Natural killer cell (primary cell): ENCODE measurements at regions of chr13 and their contacts with region 1.

Region 1: DNA sequence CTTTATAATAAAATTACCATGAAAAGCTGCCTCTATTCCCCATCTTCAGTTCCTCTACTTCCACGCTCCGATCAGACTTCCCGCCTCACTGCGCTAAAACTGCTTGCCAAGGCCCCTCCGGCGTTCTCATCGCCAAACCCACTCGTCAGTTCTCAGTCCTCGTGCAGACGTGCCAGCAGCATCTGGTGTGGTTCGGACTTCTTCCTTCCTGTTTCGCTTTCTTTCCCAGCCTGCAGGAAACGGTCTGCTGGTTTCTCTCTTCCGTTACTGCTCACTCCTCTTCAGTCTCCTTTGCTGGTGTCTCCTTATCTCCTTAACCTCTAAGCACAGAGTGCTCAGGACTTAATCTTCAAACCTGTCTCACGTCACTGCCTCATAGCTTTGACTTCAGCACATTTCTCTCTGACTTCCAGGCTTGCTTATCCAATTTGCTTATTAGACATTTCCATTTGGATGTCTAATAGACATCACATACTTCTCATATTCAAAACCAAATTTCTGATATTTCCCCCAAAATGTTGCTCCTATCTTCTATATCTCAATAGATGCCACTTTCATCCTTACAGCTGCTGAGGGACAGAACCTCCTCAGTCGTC is 40.3 kb downstream of the RCBTB2 start:
- DNase-seq: peak; percentile 67 to 90
- ATAC-seq: peak; percentile 76 to 89 (median 82)
- H3K4me3 ChIP-seq: peak overlapping the region; percentile 44
- H3K4me3 Mint-ChIP-seq: no peak overlapping the region
- H3K27ac ChIP-seq: peak overlapping the region; percentile 90
- H3K27ac Mint-ChIP-seq: no peak overlapping the region
- H3K4me1 ChIP-seq: peaks cover 59% of the 10 kb centered on the region
- H3K4me1 Mint-ChIP-seq: peaks cover 49 to 51% of the 10 kb centered on the region in 2 donors
- H3K27me3 ChIP-seq: no peaks in the 10 kb centered on the region
- H3K27me3 Mint-ChIP-seq: no peaks in the 10 kb centered on the region
- CTCF ChIP-seq: no peak

Region 2: GRCh38 chr13:48233046-48233907 is 259.3 kb before region 1 on chr13 and contains the start of gene ITM2B:
- intact Hi-C with region 1: loop called (anchors 10 kb)
- DNase-seq: peak; percentile 62 to 86
- ATAC-seq: peak; percentile 62 to 83 (median 73)
- H3K4me3 ChIP-seq: peak within 1 kb of the TSS; percentile 96
- H3K4me3 Mint-ChIP-seq: peak within 1 kb of the TSS; percentile 94
- H3K27ac ChIP-seq: peak within 1 kb of the TSS; percentile 97
- H3K27ac Mint-ChIP-seq: peak within 1 kb of the TSS; percentile 92 to 94
- H3K4me1 ChIP-seq: peaks cover 15% of the 10 kb centered on the region
- H3K4me1 Mint-ChIP-seq: peaks cover 47 to 51% of the 10 kb centered on the region in 2 donors
- H3K27me3 ChIP-seq: no peaks in the 10 kb centered on the region
- H3K27me3 Mint-ChIP-seq: peaks cover 0 to 2% of the 10 kb centered on the region in 2 donors
- CTCF ChIP-seq: peak; percentile 39
- total RNA-seq, gene ITM2B: 305 to 387 (median 309) TPM

Region 3: DNA sequence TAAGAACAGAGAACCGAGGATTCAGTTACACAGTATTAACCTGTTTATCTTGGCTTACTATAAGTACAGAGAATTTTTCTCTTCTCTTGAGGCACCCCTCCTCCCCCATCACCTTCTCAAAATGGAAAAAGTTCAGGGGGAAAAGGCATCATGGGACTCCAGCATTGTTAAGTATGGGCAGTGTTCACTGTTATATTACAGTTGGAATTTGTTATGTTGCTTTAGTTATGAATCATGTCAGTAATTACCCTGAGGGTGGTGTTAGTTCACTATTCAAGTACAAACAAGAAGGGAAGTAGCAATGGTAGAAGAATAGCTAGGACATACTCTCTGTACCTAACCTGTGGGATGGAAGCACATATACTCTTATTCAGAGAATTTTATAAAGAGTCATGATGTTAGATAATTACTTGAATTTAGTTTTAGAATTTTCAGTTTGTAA is 91.7 kb before region 1 on chr13:
- intact Hi-C with region 1: loop called (anchors 2 kb)
- DNase-seq: peak in 1 of 2 donors; percentile 51
- ATAC-seq: peak; percentile 20 to 48 (median 29)
- H3K4me3 ChIP-seq: no peak overlapping the region
- H3K4me3 Mint-ChIP-seq: peak overlapping the region; percentile 63
- H3K27ac ChIP-seq: peak overlapping the region; percentile 38
- H3K27ac Mint-ChIP-seq: peak overlapping the region; percentile 69 to 79
- H3K4me1 ChIP-seq: peaks cover 21% of the 10 kb centered on the region
- H3K4me1 Mint-ChIP-seq: peaks cover 44 to 50% of the 10 kb centered on the region in 2 donors
- H3K27me3 ChIP-seq: no peaks in the 10 kb centered on the region
- H3K27me3 Mint-ChIP-seq: no peaks in the 10 kb centered on the region
- CTCF ChIP-seq: no peak

Region 4: GRCh38 chr13:48505597-48506091 is 13.1 kb after region 1 on chr13:
- intact Hi-C with region 1: loop called (anchors 2 kb)
- DNase-seq: peak in 1 of 2 donors; percentile 91
- ATAC-seq: peak; percentile 17 to 65 (median 50)
- H3K4me3 ChIP-seq: no peak overlapping the region
- H3K4me3 Mint-ChIP-seq: peak overlapping the region; percentile 85
- H3K27ac ChIP-seq: peak overlapping the region; percentile 80
- H3K27ac Mint-ChIP-seq: peak overlapping the region; percentile 91 to 97
- H3K4me1 ChIP-seq: peaks cover 48% of the 10 kb centered on the region
- H3K4me1 Mint-ChIP-seq: peaks cover 57 to 75% of the 10 kb centered on the region in 2 donors
- H3K27me3 ChIP-seq: no peaks in the 10 kb centered on the region
- H3K27me3 Mint-ChIP-seq: no peaks in the 10 kb centered on the region
- CTCF ChIP-seq: no peak

Region 5: DNA sequence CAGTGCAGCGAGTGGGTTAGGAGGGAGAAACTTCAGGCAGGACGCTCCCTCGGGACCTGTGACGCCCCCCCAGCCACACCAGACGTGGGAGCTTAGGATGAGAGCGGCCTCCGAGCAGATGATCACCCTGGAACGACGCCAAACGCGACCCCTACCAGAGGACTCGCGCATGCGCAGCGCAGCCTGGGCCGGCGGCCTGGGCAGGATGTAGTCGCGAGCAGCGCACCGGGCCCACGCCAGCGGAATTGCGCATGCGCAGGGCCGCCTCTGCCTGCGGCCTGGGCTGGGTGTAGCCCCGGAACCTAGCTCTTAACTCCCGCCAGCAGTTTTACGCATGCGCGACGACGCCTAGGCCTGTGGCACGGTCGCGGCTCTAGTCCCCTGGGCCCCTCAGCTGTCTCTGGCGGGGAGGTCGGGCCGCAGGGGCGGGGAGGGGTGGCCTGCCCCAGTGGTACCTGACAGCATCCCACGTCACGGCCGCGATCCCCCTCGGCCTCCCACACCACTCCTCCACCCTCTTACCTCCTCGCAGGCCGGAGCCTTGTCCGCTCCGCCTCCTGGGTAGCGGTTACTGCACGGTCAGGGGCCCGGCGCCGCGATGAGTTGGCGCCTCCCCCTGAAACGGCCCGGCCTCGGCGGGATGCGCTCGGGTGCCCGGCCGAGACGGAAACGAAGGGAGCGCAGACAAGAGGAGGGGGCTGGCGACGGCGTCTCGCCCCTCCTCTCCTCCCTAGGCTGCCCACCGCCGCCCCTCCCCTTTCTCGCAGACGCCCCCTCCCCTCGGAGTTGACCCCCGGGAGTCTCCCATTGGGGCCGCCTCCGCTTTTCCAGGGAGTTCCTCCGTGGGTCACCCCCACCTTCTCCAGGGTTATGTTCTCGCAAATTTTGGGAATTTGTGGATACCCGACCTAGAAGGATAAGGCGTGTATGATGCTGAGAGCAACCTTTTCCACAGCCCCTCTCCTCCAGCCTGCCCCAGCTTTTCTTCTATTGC is 40.2 kb after region 1 on chr13 and contains the start of gene RCBTB2:
- intact Hi-C with region 1: loop called (anchors 2 kb)
- DNase-seq: peak; percentile 98 to 100
- ATAC-seq: peak; percentile 84 to 95 (median 87)
- H3K4me3 ChIP-seq: peak within 1 kb of the TSS; percentile 84
- H3K4me3 Mint-ChIP-seq: peak within 1 kb of the TSS; percentile 96
- H3K27ac ChIP-seq: peak within 1 kb of the TSS; percentile 96
- H3K27ac Mint-ChIP-seq: peak within 1 kb of the TSS; percentile 96 to 98
- H3K4me1 ChIP-seq: peaks cover 16% of the 10 kb centered on the region
- H3K4me1 Mint-ChIP-seq: peaks cover 45 to 50% of the 10 kb centered on the region in 2 donors
- H3K27me3 ChIP-seq: no peaks in the 10 kb centered on the region
- H3K27me3 Mint-ChIP-seq: no peaks in the 10 kb centered on the region
- CTCF ChIP-seq: no peak
- total RNA-seq, gene RCBTB2: 21.9 to 27.1 (median 24.2) TPM

Region 6: DNA sequence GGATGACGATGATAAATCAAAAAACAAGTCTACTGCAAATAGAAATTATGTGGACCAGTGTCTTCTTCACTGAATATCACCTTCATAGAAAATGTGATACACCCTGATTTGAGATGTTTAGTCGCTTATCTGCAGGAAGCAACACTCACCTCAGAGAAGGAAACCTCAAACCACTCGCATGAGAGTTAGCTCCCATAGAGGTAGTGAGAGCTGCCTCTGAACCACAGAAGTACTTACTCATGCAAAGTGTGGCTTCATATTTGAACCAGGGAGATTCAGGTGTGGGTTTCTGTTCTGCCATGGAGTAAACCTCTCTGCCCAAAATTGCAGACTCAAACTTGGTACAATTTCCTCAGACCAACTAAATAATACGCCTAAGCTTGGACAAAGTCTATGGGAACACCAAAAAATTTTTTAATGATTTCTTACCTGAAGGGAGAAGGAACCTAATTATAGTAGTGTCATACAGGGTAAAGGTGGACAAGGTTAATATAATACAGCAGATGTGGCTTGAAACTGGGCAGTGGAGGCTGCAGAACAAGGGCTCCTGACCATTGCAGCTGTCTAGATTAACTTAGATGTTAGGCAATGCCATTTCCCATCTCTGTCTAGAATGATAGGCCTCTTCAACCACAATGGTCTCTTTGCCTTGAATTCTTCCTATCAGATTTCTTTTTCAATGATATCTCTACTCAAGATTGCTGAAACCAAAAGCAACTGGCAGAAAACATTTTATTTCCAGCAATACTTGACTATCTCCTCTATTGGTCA is 69.9 kb after region 1 on chr13:
- intact Hi-C with region 1: loop called (anchors 1 kb)
- DNase-seq: peak; percentile 33 to 92
- ATAC-seq: peak; percentile 85 to 99 (median 98)
- H3K4me3 ChIP-seq: no peak overlapping the region
- H3K4me3 Mint-ChIP-seq: peak overlapping the region; percentile 80
- H3K27ac ChIP-seq: peak overlapping the region; percentile 42
- H3K27ac Mint-ChIP-seq: peak overlapping the region; percentile 52 to 68
- H3K4me1 ChIP-seq: peaks cover 16% of the 10 kb centered on the region
- H3K4me1 Mint-ChIP-seq: peaks cover 54 to 61% of the 10 kb centered on the region in 2 donors
- H3K27me3 ChIP-seq: no peaks in the 10 kb centered on the region
- H3K27me3 Mint-ChIP-seq: peaks cover 6 to 25% of the 10 kb centered on the region in 2 donors
- CTCF ChIP-seq: no peak